CD4-positive, alpha-beta T cell (primary cell): ENCODE measurements at regions of chr2 and their contacts with region 1.

Region 1: GRCh38 chr2:197851451-197851850 is 47.1 kb downstream of the PLCL1 start:
- DNase-seq: peak in 4 of 14 experiments; percentile 20 to 53 (median 38)
- ATAC-seq: no peak
- H3K4me3 ChIP-seq: no peak overlapping the region
- H3K4me3 Mint-ChIP-seq: peak overlapping the region; percentile 12
- H3K27ac ChIP-seq: no peak overlapping the region
- H3K27ac Mint-ChIP-seq: peak overlapping the region; percentile 94
- H3K4me1 ChIP-seq: peaks cover 24% of the 10 kb centered on the region
- H3K4me1 Mint-ChIP-seq: peaks cover 96% of the 10 kb centered on the region
- H3K27me3 ChIP-seq: no peaks in the 10 kb centered on the region
- H3K27me3 Mint-ChIP-seq: no peaks in the 10 kb centered on the region
- CTCF ChIP-seq: peak; percentile 29

Region 2: GRCh38 chr2:197867624-197868023 is 16.2 kb after region 1 on chr2:
- CTCF ChIA-PET with region 1: interaction called, 3 read pairs
- POLR2A ChIA-PET with region 1: interaction called, 35 read pairs
- intact Hi-C with region 1: loop called (anchors 2 kb)
- DNase-seq: no peak
- ATAC-seq: no peak
- H3K4me3 ChIP-seq: no peak overlapping the region
- H3K4me3 Mint-ChIP-seq: no peak overlapping the region
- H3K27ac ChIP-seq: no peak overlapping the region
- H3K27ac Mint-ChIP-seq: peak overlapping the region; percentile 93
- H3K4me1 ChIP-seq: peaks cover 37% of the 10 kb centered on the region
- H3K4me1 Mint-ChIP-seq: peaks cover 84% of the 10 kb centered on the region
- H3K27me3 ChIP-seq: no peaks in the 10 kb centered on the region
- H3K27me3 Mint-ChIP-seq: no peaks in the 10 kb centered on the region
- CTCF ChIP-seq: no peak

Region 3: GRCh38 chr2:197889041-197889440 is 37.6 kb after region 1 on chr2:
- CTCF ChIA-PET with region 1: no interaction called
- POLR2A ChIA-PET with region 1: interaction called, 10 read pairs
- intact Hi-C with region 1: no loop called
- DNase-seq: peak in 7 of 14 experiments; percentile 21 to 78 (median 44)
- ATAC-seq: peak; percentile 85
- H3K4me3 ChIP-seq: no peak overlapping the region
- H3K4me3 Mint-ChIP-seq: peak overlapping the region; percentile 64
- H3K27ac ChIP-seq: peak overlapping the region in 1 of 2 donors; percentile 6
- H3K27ac Mint-ChIP-seq: peak overlapping the region; percentile 90
- H3K4me1 ChIP-seq: peaks cover 28% of the 10 kb centered on the region
- H3K4me1 Mint-ChIP-seq: peaks cover 79% of the 10 kb centered on the region
- H3K27me3 ChIP-seq: no peaks in the 10 kb centered on the region
- H3K27me3 Mint-ChIP-seq: no peaks in the 10 kb centered on the region
- CTCF ChIP-seq: no peak